Mammary epithelial cell (primary cell): ENCODE measurements at regions of chr1 and their contacts with region 1.

Region 1: GRCh38 chr1:185317034-185317885 is at the start of gene IVNS1ABP:
- DNase-seq: peak; percentile 94
- H3K4me3 ChIP-seq: peak within 1 kb of the TSS; percentile 75 to 76 (median 75)
- H3K27ac ChIP-seq: peak within 1 kb of the TSS; percentile 98
- H3K4me1 ChIP-seq: peaks cover 10% of the 10 kb centered on the region
- H3K27me3 ChIP-seq: no peaks in the 10 kb centered on the region
- CTCF ChIP-seq: peak; percentile 6 to 46
- total RNA-seq, gene IVNS1ABP: 159 to 351 TPM

Region 2: DNA sequence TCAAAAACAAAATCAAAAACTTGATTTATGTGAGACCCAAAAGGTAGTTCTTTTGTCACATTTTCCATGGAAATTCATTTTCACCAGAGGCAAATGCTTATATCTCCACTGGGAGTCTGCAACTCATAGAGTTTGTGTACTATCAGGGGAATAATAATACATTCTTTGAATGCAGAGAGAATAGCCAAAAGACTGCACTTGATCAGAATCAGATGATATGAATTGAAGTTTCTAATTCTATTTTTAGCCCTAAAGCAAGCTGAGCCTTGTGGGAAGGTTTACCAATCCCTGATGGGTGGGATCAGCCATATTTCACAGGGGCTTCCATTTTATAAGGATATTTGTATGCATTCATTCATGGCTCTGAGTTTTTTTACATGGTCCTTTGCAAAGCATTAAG is 1216.1 kb before region 1 on chr1:
- CTCF ChIA-PET with region 1: no interaction called
- dilution Hi-C with region 1: no loop called
- in situ Hi-C with region 1: no loop called
- intact Hi-C with region 1: no loop called
- DNase-seq: no peak
- H3K4me3 ChIP-seq: no peak overlapping the region
- H3K27ac ChIP-seq: no peak overlapping the region
- H3K4me1 ChIP-seq: no peaks in the 10 kb centered on the region
- H3K27me3 ChIP-seq: no peaks in the 10 kb centered on the region
- CTCF ChIP-seq: no peak

Region 3: DNA sequence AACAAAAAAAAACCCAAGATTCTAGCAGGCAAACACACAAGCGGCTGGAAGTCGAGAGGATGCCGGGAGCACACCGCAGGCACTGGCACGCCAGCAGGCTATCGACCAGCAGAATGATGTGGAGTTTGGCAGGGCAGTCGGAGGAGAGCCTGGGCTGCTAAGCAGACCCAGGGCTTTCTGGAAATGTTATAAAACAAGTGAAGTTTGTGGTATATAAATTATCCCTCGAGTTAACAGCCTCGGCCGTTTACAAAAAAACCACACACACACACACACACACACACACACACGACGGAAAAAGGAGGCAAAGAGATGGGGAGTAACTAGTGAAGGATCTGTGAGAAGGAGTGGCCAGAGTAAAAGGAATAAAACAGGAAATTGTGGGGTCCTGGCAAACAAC is 87.0 kb after region 1 on chr1:
- CTCF ChIA-PET with region 1: no interaction called
- dilution Hi-C with region 1: no loop called
- in situ Hi-C with region 1: no loop called
- intact Hi-C with region 1: loop called (anchors 5 kb)
- DNase-seq: no peak
- H3K4me3 ChIP-seq: no peak overlapping the region
- H3K27ac ChIP-seq: peak overlapping the region; percentile 12
- H3K4me1 ChIP-seq: peaks cover 38% of the 10 kb centered on the region
- H3K27me3 ChIP-seq: no peaks in the 10 kb centered on the region
- CTCF ChIP-seq: no peak

Region 4: DNA sequence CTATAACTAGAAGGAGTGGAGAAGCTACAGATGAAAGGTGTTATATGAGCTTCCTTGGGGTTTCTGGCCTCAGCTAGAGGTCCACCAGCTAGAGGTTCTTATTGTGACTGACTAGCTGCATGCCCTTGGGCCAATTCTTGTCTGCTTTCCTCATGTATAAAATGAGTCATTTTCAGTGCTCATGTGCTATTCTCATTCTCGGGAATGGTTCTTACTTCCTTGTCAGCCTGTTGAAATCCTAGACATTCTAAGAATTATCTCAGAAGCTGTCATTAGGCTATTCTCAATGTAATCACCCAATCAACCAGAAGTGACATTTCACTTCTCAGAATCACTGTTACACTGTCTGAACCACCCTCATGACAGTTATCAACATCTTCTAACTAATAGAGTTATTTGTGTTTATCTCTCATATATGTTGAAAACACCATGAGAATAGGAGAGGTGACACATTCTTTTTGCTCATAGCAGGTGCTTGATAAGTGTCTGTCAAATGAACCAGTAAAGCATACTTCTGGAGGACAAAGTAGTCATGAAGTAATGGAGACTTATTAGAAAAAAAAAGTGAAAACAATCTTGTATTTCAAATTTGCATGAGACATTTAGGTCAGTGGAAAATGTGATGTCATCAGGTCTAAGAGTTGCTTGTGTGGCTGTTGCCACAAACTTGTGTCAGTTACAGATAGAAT is 122.6 kb after region 1 on chr1:
- CTCF ChIA-PET with region 1: no interaction called
- dilution Hi-C with region 1: no loop called
- in situ Hi-C with region 1: no loop called
- intact Hi-C with region 1: loop called (anchors 2 kb)
- DNase-seq: peak; percentile 89
- H3K4me3 ChIP-seq: no peak overlapping the region
- H3K27ac ChIP-seq: peak overlapping the region; percentile 12
- H3K4me1 ChIP-seq: peaks cover 25% of the 10 kb centered on the region
- H3K27me3 ChIP-seq: no peaks in the 10 kb centered on the region
- CTCF ChIP-seq: no peak

Region 5: DNA sequence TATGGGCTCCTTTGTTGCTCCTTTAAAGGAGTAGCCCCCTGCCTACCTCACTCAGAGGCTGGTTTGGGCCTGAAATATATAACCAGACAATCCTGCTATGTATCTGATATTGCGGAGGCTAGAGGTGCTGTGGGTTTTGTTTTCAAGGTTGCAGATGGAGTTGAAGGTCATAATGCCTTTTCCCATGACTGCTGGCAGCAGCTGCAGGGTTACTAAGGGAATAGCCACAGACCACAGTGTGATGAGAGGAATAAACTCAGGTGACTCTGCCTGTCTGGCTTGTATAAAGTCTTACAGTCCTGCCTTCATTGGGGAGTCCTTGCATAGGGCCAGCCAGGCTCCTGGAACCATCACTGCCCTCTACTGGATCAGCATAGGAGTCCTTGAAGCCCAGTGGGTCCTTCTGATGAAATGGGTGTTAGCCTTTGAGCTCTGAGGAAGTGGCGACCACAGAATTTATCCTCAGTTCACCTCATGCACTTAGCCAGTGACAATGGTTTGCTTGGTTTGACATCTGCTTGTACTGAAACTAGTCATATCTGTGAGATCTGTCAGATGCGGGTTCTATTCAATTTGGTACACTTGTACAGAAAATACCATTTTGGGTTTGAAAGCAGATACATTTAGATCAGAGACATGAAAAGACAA is 242.5 kb after region 1 on chr1:
- CTCF ChIA-PET with region 1: interaction called, 5 read pairs
- dilution Hi-C with region 1: no loop called
- in situ Hi-C with region 1: loop called in 1 of 2 experiments (anchors 25 kb)
- intact Hi-C with region 1: loop called (anchors 1 kb)
- DNase-seq: peak; percentile 65
- H3K4me3 ChIP-seq: no peak overlapping the region
- H3K27ac ChIP-seq: no peak overlapping the region
- H3K4me1 ChIP-seq: peaks cover 17% of the 10 kb centered on the region
- H3K27me3 ChIP-seq: no peaks in the 10 kb centered on the region
- CTCF ChIP-seq: peak; percentile 60 to 74

Region 6: DNA sequence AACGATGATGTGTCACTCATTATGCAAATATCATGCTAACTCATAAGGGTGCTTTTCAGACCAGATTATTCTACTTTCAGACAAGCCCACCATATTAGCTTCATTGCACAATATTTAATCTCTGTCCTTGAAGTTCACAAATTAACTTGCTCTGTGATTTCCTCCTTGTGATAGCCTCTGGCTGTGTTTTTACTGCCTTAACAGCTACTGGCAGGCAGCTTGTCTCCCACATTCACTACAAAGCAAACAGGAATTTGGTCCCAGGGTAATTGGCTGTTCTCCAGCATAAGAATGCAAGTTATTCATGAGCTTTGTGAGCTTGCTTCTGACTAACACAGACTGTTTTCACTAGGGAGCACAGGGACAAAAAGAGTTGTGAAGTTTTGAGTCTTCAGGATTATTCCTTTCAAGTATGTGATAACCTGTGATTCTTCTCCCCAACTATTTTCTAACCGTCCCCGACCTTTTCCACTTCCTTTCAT is 329.0 kb after region 1 on chr1:
- CTCF ChIA-PET with region 1: interaction called, 4 read pairs
- dilution Hi-C with region 1: no loop called
- in situ Hi-C with region 1: no loop called
- intact Hi-C with region 1: loop called (anchors 1 kb)
- DNase-seq: peak; percentile 99
- H3K4me3 ChIP-seq: peak overlapping the region; percentile 22 to 30 (median 25)
- H3K27ac ChIP-seq: peak overlapping the region; percentile 92
- H3K4me1 ChIP-seq: peaks cover 29% of the 10 kb centered on the region
- H3K27me3 ChIP-seq: no peaks in the 10 kb centered on the region
- CTCF ChIP-seq: no peak